Heart right ventricle (tissue), 16 donors: ENCODE measurements at regions of chr13 and their contacts with region 1.

Region 1: GRCh38 chr13:31824705-31825517 is 85.6 kb downstream of the RXFP2 start:
- DNase-seq: peak in 1 of 2 donors; percentile 37
- ATAC-seq: peak; percentile 60 to 79 (median 70)
- H3K4me3 ChIP-seq: no peak overlapping the region
- H3K27ac ChIP-seq: no peak overlapping the region
- H3K4me1 ChIP-seq: peaks cover 0 to 17% (median 0%) of the 10 kb centered on the region in 9 donors
- H3K27me3 ChIP-seq: no peaks in the 10 kb centered on the region
- CTCF ChIP-seq: peak in 7 of 9 donors; percentile 37 to 69 (median 58)

Region 2: DNA sequence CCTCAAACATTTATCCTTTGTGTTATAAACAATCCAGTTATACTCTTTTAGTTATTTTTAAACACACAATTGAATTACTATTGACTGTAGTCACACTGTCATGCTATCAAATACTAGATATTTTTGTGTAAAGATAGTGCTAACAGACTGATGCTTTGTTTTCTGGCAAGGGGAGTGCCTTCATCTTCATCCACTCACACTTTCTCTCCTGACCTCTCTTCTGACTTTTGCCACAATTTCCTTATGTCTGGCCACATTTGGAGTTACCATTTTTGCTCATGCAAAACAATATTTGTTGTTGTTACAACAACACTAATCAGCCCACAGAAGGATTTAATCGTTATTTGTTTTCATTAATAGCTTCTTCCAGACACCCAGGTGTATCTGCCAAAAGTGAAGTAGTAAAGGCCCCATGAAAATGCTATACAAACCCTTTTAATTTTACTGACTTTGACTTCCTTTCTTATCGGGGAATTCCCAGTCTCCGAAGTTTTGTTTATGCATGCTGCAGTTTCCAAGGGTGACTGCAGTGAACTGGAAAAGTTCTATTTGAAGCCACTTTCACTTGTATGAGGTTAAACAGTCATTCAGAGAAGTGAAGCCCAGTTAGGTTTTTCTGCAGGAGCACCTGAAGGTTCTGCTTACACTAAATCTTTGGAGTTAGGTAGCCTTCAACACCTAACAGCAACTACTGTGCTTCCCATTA is 140.6 kb after region 1 on chr13:
- intact Hi-C with region 1: no loop called
- DNase-seq: no peak
- ATAC-seq: peak in 5 of 8 donors; percentile 48 to 60 (median 51)
- H3K4me3 ChIP-seq: no peak overlapping the region
- H3K27ac ChIP-seq: peak overlapping the region in 4 of 10 donors; percentile 19 to 43 (median 36)
- H3K4me1 ChIP-seq: peaks cover 0 to 67% (median 50%) of the 10 kb centered on the region in 9 donors
- H3K27me3 ChIP-seq: no peaks in the 10 kb centered on the region
- CTCF ChIP-seq: no peak

Region 3: DNA sequence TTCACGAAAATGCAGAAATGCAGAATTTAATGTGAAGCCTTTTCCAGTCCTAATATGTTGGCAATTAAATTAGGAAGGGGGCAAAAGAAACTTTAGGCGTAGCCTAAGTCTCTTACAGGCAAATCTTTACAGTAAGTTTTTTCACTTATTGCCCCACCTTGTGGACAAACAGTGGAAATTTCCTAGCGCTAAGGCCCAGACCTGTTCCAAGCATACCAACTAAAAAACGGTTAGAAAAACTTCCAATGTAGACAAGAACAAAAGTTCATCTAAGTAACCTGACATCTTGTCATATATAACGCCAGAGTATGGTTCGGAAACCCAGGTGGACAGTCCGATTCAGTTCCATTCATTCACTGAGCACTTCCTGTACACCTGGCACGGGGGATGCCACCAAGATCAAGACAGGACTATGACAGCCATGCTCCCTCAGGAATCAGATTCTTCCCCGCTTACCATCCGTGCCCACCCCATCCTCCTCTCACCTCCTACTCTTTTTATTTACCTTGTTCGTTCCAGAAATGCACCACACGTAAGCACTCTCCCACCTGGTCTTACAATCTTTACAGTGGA is 485.3 kb after region 1 on chr13:
- intact Hi-C with region 1: loop called in 8 of 10 experiments (anchors 2 to 10 kb)
- DNase-seq: peak in 1 of 2 donors; percentile 13
- ATAC-seq: peak; percentile 66 to 84 (median 75)
- H3K4me3 ChIP-seq: peak overlapping the region in 7 of 10 donors; percentile 9 to 39 (median 33)
- H3K27ac ChIP-seq: peak overlapping the region in 3 of 10 donors; percentile 17 to 42 (median 23)
- H3K4me1 ChIP-seq: peaks cover 0 to 23% (median 9%) of the 10 kb centered on the region in 9 donors
- H3K27me3 ChIP-seq: no peaks in the 10 kb centered on the region
- CTCF ChIP-seq: peak; percentile 65 to 85 (median 76)

Region 4: DNA sequence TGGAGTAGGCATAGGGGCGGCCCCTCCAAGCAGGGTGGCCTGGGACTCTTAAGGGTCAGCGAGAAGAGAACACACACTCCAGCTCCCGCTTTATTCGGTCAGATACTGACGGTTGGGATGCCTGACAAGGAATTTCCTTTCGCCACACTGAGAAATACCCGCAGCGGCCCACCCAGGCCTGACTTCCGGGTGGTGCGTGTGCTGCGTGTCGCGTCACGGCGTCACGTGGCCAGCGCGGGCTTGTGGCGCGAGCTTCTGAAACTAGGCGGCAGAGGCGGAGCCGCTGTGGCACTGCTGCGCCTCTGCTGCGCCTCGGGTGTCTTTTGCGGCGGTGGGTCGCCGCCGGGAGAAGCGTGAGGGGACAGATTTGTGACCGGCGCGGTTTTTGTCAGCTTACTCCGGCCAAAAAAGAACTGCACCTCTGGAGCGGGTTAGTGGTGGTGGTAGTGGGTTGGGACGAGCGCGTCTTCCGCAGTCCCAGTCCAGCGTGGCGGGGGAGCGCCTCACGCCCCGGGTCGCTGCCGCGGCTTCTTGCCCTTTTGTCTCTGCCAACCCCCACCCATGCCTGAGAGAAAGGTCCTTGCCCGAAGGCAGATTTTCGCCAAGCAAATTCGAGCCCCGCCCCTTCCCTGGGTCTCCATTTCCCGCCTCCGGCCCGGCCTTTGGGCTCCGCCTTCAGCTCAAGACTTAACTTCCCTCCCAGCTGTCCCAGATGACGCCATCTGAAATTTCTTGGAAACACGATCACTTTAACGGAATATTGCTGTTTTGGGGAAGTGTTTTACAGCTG is 490.5 kb after region 1 on chr13 and contains the starts of genes BRCA2 and ZAR1L:
- intact Hi-C with region 1: loop called in 6 of 10 experiments (anchors 2 to 10 kb)
- DNase-seq: peak; percentile 89
- ATAC-seq: peak; percentile 96 to 99 (median 98)
- H3K4me3 ChIP-seq: peak within 1 kb of the TSS; percentile 68 to 97 (median 80)
- H3K27ac ChIP-seq: peak within 1 kb of the TSS; percentile 79 to 100 (median 94)
- H3K4me1 ChIP-seq: peaks cover 0 to 37% (median 5%) of the 10 kb centered on the region in 9 donors
- H3K27me3 ChIP-seq: no peaks in the 10 kb centered on the region
- CTCF ChIP-seq: peak in 2 of 9 donors; percentile 3 to 10
- total RNA-seq, gene BRCA2: 0.12 to 2.3 (median 0.47) TPM
- total RNA-seq, gene ZAR1L: not detected